Naive thymus-derived CD4-positive, alpha-beta T cell (primary cell): ENCODE measurements at regions of chr5 and their contacts with region 1.

Region 1: DNA sequence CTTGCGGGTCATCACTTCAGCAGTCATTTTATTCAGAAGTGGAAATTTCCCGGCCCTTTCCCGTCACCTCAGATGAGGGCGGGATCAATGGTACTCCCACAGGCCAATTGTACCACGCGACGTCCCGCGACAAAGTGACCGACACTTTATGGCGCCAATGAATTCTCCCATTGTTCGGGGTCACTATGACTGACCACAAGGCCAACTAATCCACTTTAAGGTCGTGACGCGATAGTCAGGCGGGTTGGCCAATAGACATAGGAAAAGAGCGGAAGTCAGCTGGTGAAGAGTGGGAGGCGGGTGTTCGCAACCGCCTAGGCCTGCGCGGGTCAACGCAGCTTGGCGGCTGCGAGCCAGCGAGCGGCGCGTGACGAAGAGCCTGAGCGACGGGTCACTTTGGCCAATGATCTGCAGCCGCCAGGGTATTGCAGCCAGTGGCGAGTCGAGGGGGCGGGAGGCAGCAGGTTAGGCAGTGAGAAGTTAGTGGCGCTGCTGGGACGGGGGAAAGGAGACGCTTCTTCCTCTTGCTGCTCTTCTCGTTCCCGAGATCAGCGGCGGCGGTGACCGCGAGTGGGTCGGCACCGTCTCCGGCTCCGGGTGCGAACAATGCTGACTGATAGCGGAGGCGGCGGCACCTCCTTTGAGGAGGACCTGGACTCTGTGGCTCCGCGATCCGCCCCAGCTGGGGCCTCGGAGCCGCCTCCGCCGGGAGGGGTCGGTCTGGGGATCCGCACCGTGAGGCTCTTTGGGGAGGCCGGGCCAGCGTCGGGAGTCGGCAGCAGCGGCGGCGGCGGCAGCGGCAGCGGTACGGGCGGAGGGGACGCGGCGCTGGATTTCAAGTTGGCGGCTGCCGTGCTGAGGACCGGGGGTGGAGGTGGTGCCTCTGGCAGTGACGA is at the start of gene ANKHD1:
- DNase-seq: peak; percentile 89 to 99 (median 98)
- ATAC-seq: peak; percentile 88
- H3K4me3 ChIP-seq: peak within 1 kb of the TSS; percentile 87
- H3K4me3 Mint-ChIP-seq: peak within 1 kb of the TSS in 1 of 10 donors; percentile 86
- H3K27ac ChIP-seq: peak within 1 kb of the TSS; percentile 90
- H3K27ac Mint-ChIP-seq: peak within 1 kb of the TSS in 2 of 9 donors; percentile 90 to 91
- H3K4me1 ChIP-seq: peaks cover 11 to 30% of the 10 kb centered on the region in 2 donors
- H3K4me1 Mint-ChIP-seq: peaks cover 23 to 45% (median 38%) of the 10 kb centered on the region in 7 donors
- H3K27me3 ChIP-seq: no peaks in the 10 kb centered on the region
- H3K27me3 Mint-ChIP-seq: no peaks in the 10 kb centered on the region
- total RNA-seq, gene ANKHD1: 145 to 240 (median 217) TPM

Region 2: GRCh38 chr5:139403787-139404483 is 997.7 kb before region 1 on chr5 and contains the start of gene SPATA24:
- CTCF ChIA-PET with region 1: no interaction called
- POLR2A ChIA-PET with region 1: no interaction called
- intact Hi-C with region 1: loop called in 1 of 2 experiments (anchors 5 kb)
- DNase-seq: peak; percentile 90 to 99 (median 98)
- ATAC-seq: peak; percentile 94
- H3K4me3 ChIP-seq: peak within 1 kb of the TSS; percentile 56
- H3K4me3 Mint-ChIP-seq: peak within 1 kb of the TSS; percentile 88 to 98 (median 94)
- H3K27ac ChIP-seq: peak within 1 kb of the TSS; percentile 88
- H3K27ac Mint-ChIP-seq: peak within 1 kb of the TSS; percentile 96 to 100 (median 99)
- H3K4me1 ChIP-seq: peaks cover 16 to 18% of the 10 kb centered on the region in 2 donors
- H3K4me1 Mint-ChIP-seq: peaks cover 26 to 42% (median 36%) of the 10 kb centered on the region in 7 donors
- H3K27me3 ChIP-seq: no peaks in the 10 kb centered on the region
- H3K27me3 Mint-ChIP-seq: no peaks in the 10 kb centered on the region
- total RNA-seq, gene SPATA24: 4.4 to 7.6 (median 5.8) TPM

Region 3: DNA sequence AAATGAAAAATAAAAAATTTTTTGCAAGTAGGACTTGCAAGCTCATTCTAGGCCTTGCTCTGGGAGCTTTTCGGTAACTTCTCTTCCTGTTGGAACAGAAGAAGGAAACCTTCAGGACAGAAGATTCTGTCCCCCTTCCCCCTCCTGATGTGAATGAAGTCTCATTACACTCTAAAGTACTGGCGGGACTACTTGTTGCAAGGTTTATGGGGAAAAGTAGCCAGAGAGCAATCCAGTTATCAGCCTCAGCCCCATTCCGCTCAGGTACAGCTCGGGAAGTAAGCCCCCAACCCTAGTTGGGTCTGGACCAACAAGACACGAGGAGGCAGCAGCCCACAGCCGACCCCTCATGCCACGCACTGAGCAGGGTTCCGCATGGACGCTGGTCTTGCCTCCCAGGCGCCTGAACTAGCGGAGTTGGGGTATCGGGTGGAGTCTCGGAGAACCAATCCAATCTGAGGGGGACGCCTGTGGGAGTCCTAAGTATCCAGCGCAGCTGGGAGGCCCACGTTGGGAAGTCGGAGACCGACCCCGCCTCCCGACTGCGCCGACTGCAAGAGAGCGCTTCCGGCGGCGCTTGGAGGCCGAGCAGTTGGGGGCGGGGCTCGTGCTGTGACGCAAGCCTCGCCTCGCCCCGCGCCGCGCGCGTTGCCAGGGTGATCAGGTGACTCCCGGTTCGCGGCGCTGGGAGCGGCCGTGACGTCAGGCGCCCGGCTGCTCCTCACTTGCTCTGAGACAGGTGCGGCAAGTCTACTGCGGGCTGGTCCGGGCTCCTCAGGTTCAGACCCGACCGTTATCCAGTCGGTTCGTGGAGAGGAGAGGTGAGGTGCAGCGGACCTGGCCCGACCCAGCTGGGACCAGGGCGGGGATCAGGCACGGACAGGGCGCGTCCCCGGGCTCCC is 226.9 kb before region 1 on chr5 and contains the start of gene CYSTM1:
- CTCF ChIA-PET with region 1: no interaction called
- POLR2A ChIA-PET with region 1: no interaction called
- intact Hi-C with region 1: loop called in 1 of 2 experiments (anchors 1 kb)
- DNase-seq: peak; percentile 95 to 98 (median 97)
- ATAC-seq: peak; percentile 94
- H3K4me3 ChIP-seq: peak within 1 kb of the TSS; percentile 97
- H3K4me3 Mint-ChIP-seq: peak within 1 kb of the TSS; percentile 84 to 95 (median 91)
- H3K27ac ChIP-seq: peak within 1 kb of the TSS; percentile 89
- H3K27ac Mint-ChIP-seq: peak within 1 kb of the TSS; percentile 78 to 98 (median 95)
- H3K4me1 ChIP-seq: peaks cover 8 to 14% of the 10 kb centered on the region in 2 donors
- H3K4me1 Mint-ChIP-seq: peaks cover 7 to 20% (median 14%) of the 10 kb centered on the region in 7 donors
- H3K27me3 ChIP-seq: no peaks in the 10 kb centered on the region
- H3K27me3 Mint-ChIP-seq: peaks cover 0 to 30% (median 0%) of the 10 kb centered on the region in 5 donors
- total RNA-seq, gene CYSTM1: 1.6 to 11.1 (median 3.5) TPM

Region 4: DNA sequence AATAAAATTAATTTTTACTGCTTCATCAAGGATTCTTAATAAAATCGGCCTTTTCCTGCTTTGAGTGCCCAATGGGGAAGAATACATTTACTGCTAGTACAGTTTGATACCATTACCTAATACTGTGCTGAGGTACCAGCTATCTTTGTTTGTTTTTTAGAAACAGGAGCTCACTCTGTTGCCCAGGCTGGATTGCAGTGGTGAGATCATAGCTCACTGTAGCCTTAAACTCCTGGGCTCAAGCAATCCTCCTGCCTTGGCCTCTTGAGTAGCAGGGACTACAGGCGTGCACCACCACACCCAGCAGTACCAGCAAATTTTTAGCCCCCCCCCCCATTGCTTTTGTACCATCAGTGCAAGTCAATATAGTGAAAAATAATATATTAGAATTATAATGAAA is 13.6 kb before region 1 on chr5:
- CTCF ChIA-PET with region 1: no interaction called
- POLR2A ChIA-PET with region 1: interaction called, 10 read pairs
- intact Hi-C with region 1: no loop called
- DNase-seq: no peak
- ATAC-seq: no peak
- H3K4me3 ChIP-seq: no peak overlapping the region
- H3K4me3 Mint-ChIP-seq: no peak overlapping the region
- H3K27ac ChIP-seq: no peak overlapping the region
- H3K27ac Mint-ChIP-seq: no peak overlapping the region
- H3K4me1 ChIP-seq: no peaks in the 10 kb centered on the region
- H3K4me1 Mint-ChIP-seq: peaks cover 3 to 9% (median 6%) of the 10 kb centered on the region in 7 donors
- H3K27me3 ChIP-seq: no peaks in the 10 kb centered on the region
- H3K27me3 Mint-ChIP-seq: no peaks in the 10 kb centered on the region

Region 5: DNA sequence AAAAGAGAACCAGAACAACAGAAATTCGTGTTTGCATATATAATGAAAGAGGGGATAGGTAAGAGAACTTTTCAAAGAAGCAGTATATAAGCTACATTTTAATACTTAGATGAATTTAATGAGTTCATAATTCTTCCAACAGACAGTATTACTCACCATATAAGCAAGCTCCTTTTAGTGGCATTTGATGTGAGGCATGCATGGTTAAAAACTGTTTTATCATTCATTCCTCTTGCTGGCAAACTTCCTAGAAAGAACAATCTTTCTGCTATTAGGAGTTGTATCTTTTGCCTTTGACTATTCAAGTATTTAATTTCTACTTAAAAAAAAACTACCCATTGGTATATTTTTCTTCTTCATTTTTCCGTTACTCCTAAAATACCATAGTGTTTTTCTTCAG is 80.1 kb after region 1 on chr5:
- CTCF ChIA-PET with region 1: no interaction called
- POLR2A ChIA-PET with region 1: no interaction called
- intact Hi-C with region 1: no loop called
- DNase-seq: no peak
- ATAC-seq: no peak
- H3K4me3 ChIP-seq: no peak overlapping the region
- H3K4me3 Mint-ChIP-seq: no peak overlapping the region
- H3K27ac ChIP-seq: no peak overlapping the region
- H3K27ac Mint-ChIP-seq: peak overlapping the region in 1 of 9 donors; percentile 10
- H3K4me1 ChIP-seq: no peaks in the 10 kb centered on the region
- H3K4me1 Mint-ChIP-seq: peaks cover 0 to 7% (median 6%) of the 10 kb centered on the region in 7 donors
- H3K27me3 ChIP-seq: no peaks in the 10 kb centered on the region
- H3K27me3 Mint-ChIP-seq: no peaks in the 10 kb centered on the region

Region 6: GRCh38 chr5:140632150-140633020 is 230.8 kb after region 1 on chr5:
- CTCF ChIA-PET with region 1: interaction called, 5 read pairs
- POLR2A ChIA-PET with region 1: interaction called, 10 read pairs
- intact Hi-C with region 1: no loop called
- DNase-seq: peak; percentile 29 to 64 (median 51)
- ATAC-seq: peak; percentile 81
- H3K4me3 ChIP-seq: peak overlapping the region; percentile 87
- H3K4me3 Mint-ChIP-seq: peak overlapping the region; percentile 89 to 99 (median 92)
- H3K27ac ChIP-seq: peak overlapping the region; percentile 41
- H3K27ac Mint-ChIP-seq: peak overlapping the region; percentile 29 to 88 (median 79)
- H3K4me1 ChIP-seq: peaks cover 0 to 9% of the 10 kb centered on the region in 2 donors
- H3K4me1 Mint-ChIP-seq: peaks cover 16 to 36% (median 17%) of the 10 kb centered on the region in 7 donors
- H3K27me3 ChIP-seq: no peaks in the 10 kb centered on the region
- H3K27me3 Mint-ChIP-seq: peaks cover 0 to 26% (median 0%) of the 10 kb centered on the region in 5 donors

Region 7: DNA sequence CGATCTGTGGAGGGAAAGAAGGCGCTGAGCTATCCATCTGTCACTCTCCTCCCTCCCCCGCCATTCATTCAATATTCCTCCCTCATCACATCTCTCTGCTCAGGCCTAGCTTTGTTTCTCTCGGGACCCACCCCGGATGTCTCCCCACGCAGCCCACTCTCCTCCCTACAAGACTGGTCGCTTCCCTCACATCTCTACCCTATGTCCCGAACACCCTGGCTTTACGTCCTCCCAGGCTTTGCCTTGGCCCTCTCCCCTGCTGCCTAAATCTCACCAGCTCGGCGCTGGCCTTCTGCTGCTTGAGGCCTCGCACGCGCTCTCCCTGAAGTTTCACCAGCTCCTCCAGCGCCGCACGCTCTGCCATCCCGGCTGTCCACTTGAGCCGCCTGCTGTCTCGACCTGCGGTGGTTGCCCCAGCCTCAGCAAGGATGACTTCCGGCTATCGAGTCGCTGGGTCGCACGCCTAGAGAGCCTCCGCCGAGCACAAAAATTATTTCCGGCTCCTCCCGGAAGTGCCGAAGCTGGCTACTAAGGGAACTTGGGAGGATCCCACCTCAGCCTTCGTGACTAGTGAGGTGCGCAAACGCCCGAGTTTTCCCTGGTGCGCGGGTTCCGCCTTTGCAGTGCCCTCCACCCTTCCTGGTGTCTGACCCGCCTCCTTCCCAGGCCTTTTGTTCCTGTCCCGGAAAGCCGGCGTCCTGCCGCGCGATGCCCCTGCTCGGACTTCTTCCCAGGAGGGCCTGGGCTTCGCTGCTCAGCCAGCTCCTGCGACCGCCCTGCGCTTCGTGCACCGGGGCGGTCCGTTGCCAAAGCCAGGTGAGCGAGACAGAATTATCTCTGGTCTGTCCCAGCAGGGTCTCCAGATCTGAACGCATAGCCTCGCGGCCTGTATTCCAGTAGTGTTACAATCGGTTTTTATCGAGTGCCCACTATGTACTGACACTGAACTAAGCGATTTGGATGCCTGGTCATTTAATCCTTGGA is 289.6 kb after region 1 on chr5 and contains the starts of genes HARS1 and HARS2:
- CTCF ChIA-PET with region 1: no interaction called
- POLR2A ChIA-PET with region 1: interaction called, 7 read pairs
- intact Hi-C with region 1: loop called in 1 of 2 experiments (anchors 1 kb)
- DNase-seq: peak; percentile 55 to 83 (median 71)
- ATAC-seq: peak; percentile 97
- H3K4me3 ChIP-seq: peak within 1 kb of the TSS; percentile 91
- H3K4me3 Mint-ChIP-seq: peak within 1 kb of the TSS; percentile 92 to 100 (median 99)
- H3K27ac ChIP-seq: peak within 1 kb of the TSS; percentile 89
- H3K27ac Mint-ChIP-seq: peak within 1 kb of the TSS; percentile 91 to 99 (median 98)
- H3K4me1 ChIP-seq: peaks cover 16 to 22% of the 10 kb centered on the region in 2 donors
- H3K4me1 Mint-ChIP-seq: peaks cover 29 to 60% (median 53%) of the 10 kb centered on the region in 7 donors
- H3K27me3 ChIP-seq: no peaks in the 10 kb centered on the region
- H3K27me3 Mint-ChIP-seq: no peaks in the 10 kb centered on the region
- total RNA-seq, gene HARS1: 48.7 to 85.7 (median 68.5) TPM
- total RNA-seq, gene HARS2: 25.4 to 59.6 (median 38.8) TPM

Region 8: GRCh38 chr5:141636413-141637122 is 1235.0 kb after region 1 on chr5 and contains the starts of genes HDAC3 and RELL2:
- CTCF ChIA-PET with region 1: no interaction called
- POLR2A ChIA-PET with region 1: interaction called, 4 read pairs
- intact Hi-C with region 1: loop called (anchors 2 kb)
- DNase-seq: peak; percentile 86 to 99 (median 94)
- ATAC-seq: peak; percentile 98
- H3K4me3 ChIP-seq: peak within 1 kb of the TSS; percentile 81
- H3K4me3 Mint-ChIP-seq: peak within 1 kb of the TSS; percentile 89 to 98 (median 92)
- H3K27ac ChIP-seq: peak within 1 kb of the TSS; percentile 88
- H3K27ac Mint-ChIP-seq: peak within 1 kb of the TSS; percentile 72 to 95 (median 92)
- H3K4me1 ChIP-seq: peaks cover 23 to 24% of the 10 kb centered on the region in 2 donors
- H3K4me1 Mint-ChIP-seq: peaks cover 35 to 56% (median 46%) of the 10 kb centered on the region in 7 donors
- H3K27me3 ChIP-seq: no peaks in the 10 kb centered on the region
- H3K27me3 Mint-ChIP-seq: no peaks in the 10 kb centered on the region
- total RNA-seq, gene HDAC3: 70.0 to 92.8 (median 79.0) TPM
- total RNA-seq, gene RELL2: 14.3 to 21.7 (median 17.5) TPM